Naive thymus-derived CD4-positive, alpha-beta T cell (primary cell): ENCODE measurements at regions of chr3 and their contacts with region 1.

Region 1: DNA sequence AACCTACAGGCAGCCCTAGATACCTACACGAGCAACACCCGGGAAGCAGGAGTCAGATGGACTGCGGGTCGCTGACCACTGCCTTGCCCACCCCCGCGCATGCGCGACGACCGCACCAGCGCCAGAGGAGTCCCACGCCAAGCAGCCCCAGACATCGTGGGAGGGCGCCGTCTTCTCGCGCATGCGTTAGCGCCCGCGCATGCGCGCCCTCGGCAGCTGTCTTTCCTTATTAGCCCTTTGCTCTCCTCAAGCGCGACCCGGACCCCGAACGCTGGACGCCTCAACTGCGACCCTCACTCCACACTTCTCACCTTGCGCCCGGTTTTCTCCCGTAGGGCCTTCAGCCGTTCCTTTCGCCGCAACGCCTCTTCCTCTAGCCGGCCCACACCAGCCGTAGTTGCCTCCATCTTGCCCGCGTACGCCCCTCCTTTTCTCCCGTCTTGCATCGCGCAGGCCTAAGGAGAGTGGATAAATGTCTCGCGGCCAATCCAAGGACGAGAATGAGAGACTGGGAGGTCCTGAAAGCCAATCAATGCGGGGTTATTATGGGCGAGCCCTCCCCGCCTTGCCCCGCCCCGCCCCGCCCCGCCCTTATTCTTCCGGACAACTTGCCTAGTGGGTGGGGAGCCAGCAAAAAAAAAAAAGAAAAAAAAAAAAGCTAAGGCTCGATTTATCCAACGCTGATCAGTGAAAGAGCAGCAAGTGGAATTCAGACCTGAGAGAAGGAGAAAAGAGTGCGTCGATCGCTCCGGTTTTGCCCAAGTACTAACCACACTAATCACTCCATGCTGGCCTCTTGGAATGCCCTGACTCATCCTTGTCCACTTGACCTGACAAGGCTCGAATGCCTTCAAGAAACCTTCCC is at the start of gene CCDC12:
- DNase-seq: peak; percentile 79 to 98 (median 96)
- ATAC-seq: peak; percentile 87
- H3K4me3 ChIP-seq: peak within 1 kb of the TSS; percentile 98
- H3K4me3 Mint-ChIP-seq: peak within 1 kb of the TSS; percentile 95 to 100 (median 99)
- H3K27ac ChIP-seq: peak within 1 kb of the TSS; percentile 90
- H3K27ac Mint-ChIP-seq: peak within 1 kb of the TSS; percentile 94 to 99 (median 98)
- H3K4me1 ChIP-seq: peaks cover 46 to 53% of the 10 kb centered on the region in 2 donors
- H3K4me1 Mint-ChIP-seq: peaks cover 44 to 82% (median 63%) of the 10 kb centered on the region in 7 donors
- H3K27me3 ChIP-seq: no peaks in the 10 kb centered on the region
- H3K27me3 Mint-ChIP-seq: no peaks in the 10 kb centered on the region
- total RNA-seq, gene CCDC12: 51.6 to 61.5 (median 56.9) TPM

Region 2: DNA sequence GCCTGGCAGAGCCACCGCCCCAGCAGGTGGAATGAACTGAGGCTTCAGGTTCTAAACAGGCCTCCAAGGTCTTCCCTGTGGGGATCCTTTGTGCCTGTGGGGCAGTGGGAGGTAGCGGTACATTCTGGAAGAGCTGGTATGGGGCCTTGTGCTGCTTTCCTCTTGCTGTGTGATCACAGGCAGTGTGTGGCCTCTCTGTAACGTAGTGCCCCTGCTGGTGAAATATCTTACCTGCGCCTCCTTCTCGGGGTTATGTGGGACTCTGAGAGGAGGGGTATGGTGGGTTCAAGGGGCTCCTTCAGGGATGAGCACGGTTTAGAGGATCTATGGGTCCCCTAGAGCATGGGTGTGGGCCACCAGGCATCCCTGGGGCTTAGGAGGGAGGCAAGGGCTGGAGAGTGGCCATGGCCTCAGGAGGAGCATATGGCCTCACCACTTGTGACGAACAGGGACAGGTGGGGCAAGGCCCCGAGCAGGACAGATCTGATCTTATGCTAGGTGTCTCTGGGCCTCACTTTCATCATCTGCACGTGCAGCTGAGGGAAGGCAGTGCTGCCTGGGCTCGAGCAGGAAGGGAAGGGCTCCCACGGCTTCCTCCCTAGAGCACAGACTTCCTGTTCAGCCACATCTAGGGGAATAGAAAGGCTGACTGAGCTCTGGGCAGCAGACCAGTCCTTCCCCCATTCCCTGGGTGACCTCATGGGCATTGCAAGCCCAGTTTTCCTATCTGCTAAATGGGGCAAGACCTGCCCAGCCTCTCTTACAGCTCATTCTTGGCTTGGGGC is 281.2 kb before region 1 on chr3:
- CTCF ChIA-PET with region 1: no interaction called
- POLR2A ChIA-PET with region 1: no interaction called
- intact Hi-C with region 1: loop called in 1 of 2 experiments (anchors 5 kb)
- DNase-seq: peak; percentile 19 to 58 (median 50)
- ATAC-seq: peak; percentile 37
- H3K4me3 ChIP-seq: peak overlapping the region; percentile 6
- H3K4me3 Mint-ChIP-seq: peak overlapping the region; percentile 40 to 94 (median 76)
- H3K27ac ChIP-seq: peak overlapping the region; percentile 75
- H3K27ac Mint-ChIP-seq: peak overlapping the region; percentile 76 to 95 (median 92)
- H3K4me1 ChIP-seq: peaks cover 32 to 78% of the 10 kb centered on the region in 2 donors
- H3K4me1 Mint-ChIP-seq: peaks cover 32 to 94% (median 69%) of the 10 kb centered on the region in 7 donors
- H3K27me3 ChIP-seq: no peaks in the 10 kb centered on the region
- H3K27me3 Mint-ChIP-seq: peaks cover 0 to 39% (median 0%) of the 10 kb centered on the region in 5 donors

Region 3: GRCh38 chr3:46987743-46988401 is 11.3 kb after region 1 on chr3:
- CTCF ChIA-PET with region 1: no interaction called
- POLR2A ChIA-PET with region 1: interaction called, 37 read pairs
- intact Hi-C with region 1: loop called (anchors 1 kb)
- DNase-seq: peak; percentile 75 to 90 (median 86)
- ATAC-seq: peak; percentile 98
- H3K4me3 ChIP-seq: peak overlapping the region; percentile 43
- H3K4me3 Mint-ChIP-seq: peak overlapping the region; percentile 60 to 91 (median 78)
- H3K27ac ChIP-seq: peak overlapping the region; percentile 38
- H3K27ac Mint-ChIP-seq: peak overlapping the region; percentile 84 to 91 (median 88)
- H3K4me1 ChIP-seq: peaks cover 50 to 55% of the 10 kb centered on the region in 2 donors
- H3K4me1 Mint-ChIP-seq: peaks cover 51 to 79% (median 71%) of the 10 kb centered on the region in 7 donors
- H3K27me3 ChIP-seq: no peaks in the 10 kb centered on the region
- H3K27me3 Mint-ChIP-seq: no peaks in the 10 kb centered on the region

Region 4: GRCh38 chr3:47035634-47036033 is 59.1 kb after region 1 on chr3:
- CTCF ChIA-PET with region 1: no interaction called
- POLR2A ChIA-PET with region 1: no interaction called
- intact Hi-C with region 1: loop called in 1 of 2 experiments (anchors 2 kb)
- DNase-seq: no peak
- ATAC-seq: no peak
- H3K4me3 ChIP-seq: no peak overlapping the region
- H3K4me3 Mint-ChIP-seq: no peak overlapping the region
- H3K27ac ChIP-seq: peak overlapping the region; percentile 19
- H3K27ac Mint-ChIP-seq: peak overlapping the region in 7 of 9 donors; percentile 40 to 87 (median 73)
- H3K4me1 ChIP-seq: peaks cover 9 to 14% of the 10 kb centered on the region in 2 donors
- H3K4me1 Mint-ChIP-seq: peaks cover 15 to 52% (median 36%) of the 10 kb centered on the region in 7 donors
- H3K27me3 ChIP-seq: no peaks in the 10 kb centered on the region
- H3K27me3 Mint-ChIP-seq: no peaks in the 10 kb centered on the region

Region 5: GRCh38 chr3:47282424-47283192 is 306.1 kb after region 1 on chr3 and contains the starts of genes KIF9 and KLHL18:
- CTCF ChIA-PET with region 1: no interaction called
- POLR2A ChIA-PET with region 1: interaction called, 5 read pairs
- intact Hi-C with region 1: loop called (anchors 1 kb)
- DNase-seq: peak; percentile 86 to 98 (median 97)
- ATAC-seq: peak; percentile 91
- H3K4me3 ChIP-seq: peak within 1 kb of the TSS; percentile 76
- H3K4me3 Mint-ChIP-seq: peak within 1 kb of the TSS; percentile 89 to 100 (median 98)
- H3K27ac ChIP-seq: peak within 1 kb of the TSS; percentile 93
- H3K27ac Mint-ChIP-seq: peak within 1 kb of the TSS; percentile 98 to 100 (median 99)
- H3K4me1 ChIP-seq: peaks cover 14 to 23% of the 10 kb centered on the region in 2 donors
- H3K4me1 Mint-ChIP-seq: peaks cover 29 to 56% (median 43%) of the 10 kb centered on the region in 7 donors
- H3K27me3 ChIP-seq: no peaks in the 10 kb centered on the region
- H3K27me3 Mint-ChIP-seq: no peaks in the 10 kb centered on the region
- total RNA-seq, gene KIF9: 2.7 to 15.0 (median 4.1) TPM
- total RNA-seq, gene KLHL18: 21.7 to 47.5 (median 24.5) TPM

Region 6: GRCh38 chr3:48088749-48089466 is 1112.3 kb after region 1 on chr3:
- CTCF ChIA-PET with region 1: no interaction called
- POLR2A ChIA-PET with region 1: no interaction called
- intact Hi-C with region 1: loop called in 1 of 2 experiments (anchors 5 kb)
- DNase-seq: peak; percentile 89 to 96 (median 94)
- ATAC-seq: peak; percentile 97
- H3K4me3 ChIP-seq: peak overlapping the region; percentile 85
- H3K4me3 Mint-ChIP-seq: peak overlapping the region; percentile 90 to 99 (median 96)
- H3K27ac ChIP-seq: peak overlapping the region; percentile 95
- H3K27ac Mint-ChIP-seq: peak overlapping the region; percentile 71 to 99 (median 98)
- H3K4me1 ChIP-seq: peaks cover 7 to 11% of the 10 kb centered on the region in 2 donors
- H3K4me1 Mint-ChIP-seq: peaks cover 14 to 33% (median 29%) of the 10 kb centered on the region in 7 donors
- H3K27me3 ChIP-seq: no peaks in the 10 kb centered on the region
- H3K27me3 Mint-ChIP-seq: peaks cover 0 to 18% (median 0%) of the 10 kb centered on the region in 5 donors